CD8-positive, alpha-beta T cell (primary cell): ENCODE measurements at regions of chr15 and their contacts with region 1.

Region 1: GRCh38 chr15:40593588-40594428 is at the start of gene KNL1:
- DNase-seq: peak; percentile 70 to 96 (median 85)
- ATAC-seq: peak; percentile 83
- H3K4me3 ChIP-seq: peak within 1 kb of the TSS; percentile 76 to 82
- H3K4me3 Mint-ChIP-seq: peak within 1 kb of the TSS; percentile 95
- H3K27ac ChIP-seq: peak within 1 kb of the TSS; percentile 78 to 92
- H3K27ac Mint-ChIP-seq: peak within 1 kb of the TSS; percentile 98
- H3K4me1 ChIP-seq: no peaks in the 10 kb centered on the region
- H3K4me1 Mint-ChIP-seq: peaks cover 20% of the 10 kb centered on the region
- H3K27me3 ChIP-seq: peaks cover 0 to 2% of the 10 kb centered on the region in 2 experiments
- H3K27me3 Mint-ChIP-seq: peaks cover 6% of the 10 kb centered on the region
- CTCF ChIP-seq: no peak
- total RNA-seq, gene KNL1: 0.83 to 0.98 TPM

Region 2: DNA sequence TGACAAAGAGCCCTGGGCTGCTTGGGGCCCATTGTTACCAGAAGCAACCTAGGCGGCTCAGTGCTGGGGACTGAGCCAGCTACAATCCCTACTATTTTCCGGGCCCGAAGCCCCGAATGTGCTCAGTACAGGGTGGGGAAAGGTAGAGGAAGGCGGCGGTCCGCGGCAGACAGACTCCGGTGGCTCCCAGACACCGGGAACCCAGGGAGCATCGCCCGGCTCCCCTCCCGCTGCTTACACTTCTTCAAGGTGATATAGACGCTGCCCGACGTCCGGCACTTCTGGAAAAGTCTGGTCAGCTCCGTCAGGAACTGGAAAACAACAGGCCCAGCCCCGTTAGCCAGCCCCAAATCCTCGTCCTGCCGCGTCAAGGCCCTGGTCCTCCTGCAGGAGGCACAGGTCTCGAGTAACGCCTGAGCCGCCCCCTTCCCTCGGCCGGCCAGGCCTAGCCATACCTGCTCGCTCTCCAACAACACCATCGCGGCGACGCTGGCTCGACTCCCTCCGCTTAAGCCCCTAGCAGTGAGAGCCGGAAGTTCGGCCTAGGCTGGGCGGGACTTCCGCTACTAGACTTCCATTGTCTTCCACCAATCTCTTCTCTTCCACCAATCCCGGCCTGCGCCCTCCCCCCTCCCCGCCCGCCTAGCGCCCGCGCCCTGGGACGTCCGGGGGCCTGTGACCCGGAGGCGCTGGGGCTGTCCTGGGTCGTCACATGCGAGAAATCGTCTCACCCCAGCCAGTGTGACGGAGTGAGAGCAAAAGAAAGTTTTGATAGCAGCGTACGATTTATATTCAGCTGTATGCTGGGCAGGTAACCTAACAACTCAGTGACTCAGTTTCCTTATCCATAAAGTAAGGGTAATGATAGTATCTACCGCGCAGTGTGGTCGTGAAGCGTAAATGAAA is 554.9 kb before region 1 on chr15 and contains the start of gene SRP14:
- CTCF ChIA-PET with region 1: no interaction called
- POLR2A ChIA-PET with region 1: no interaction called
- intact Hi-C with region 1: loop called in 1 of 2 experiments (anchors 5 kb)
- DNase-seq: peak; percentile 86 to 96 (median 93)
- ATAC-seq: peak; percentile 94
- H3K4me3 ChIP-seq: peak within 1 kb of the TSS; percentile 92 to 99
- H3K4me3 Mint-ChIP-seq: peak within 1 kb of the TSS; percentile 99
- H3K27ac ChIP-seq: peak within 1 kb of the TSS; percentile 84 to 96
- H3K27ac Mint-ChIP-seq: peak within 1 kb of the TSS; percentile 99
- H3K4me1 ChIP-seq: peaks cover 16% of the 10 kb centered on the region
- H3K4me1 Mint-ChIP-seq: peaks cover 43% of the 10 kb centered on the region
- H3K27me3 ChIP-seq: no peaks in the 10 kb centered on the region
- H3K27me3 Mint-ChIP-seq: no peaks in the 10 kb centered on the region
- CTCF ChIP-seq: no peak
- total RNA-seq, gene SRP14: 133 to 135 TPM

Region 3: GRCh38 chr15:40564591-40565332 is 29.0 kb before region 1 on chr15 and contains the start of gene CCDC32:
- CTCF ChIA-PET with region 1: interaction called, 10 read pairs
- POLR2A ChIA-PET with region 1: interaction called, 11 read pairs
- intact Hi-C with region 1: loop called (anchors 1 kb)
- DNase-seq: peak; percentile 84 to 99 (median 94)
- ATAC-seq: peak; percentile 90
- H3K4me3 ChIP-seq: peak within 1 kb of the TSS; percentile 89 to 97
- H3K4me3 Mint-ChIP-seq: peak within 1 kb of the TSS; percentile 95
- H3K27ac ChIP-seq: peak within 1 kb of the TSS; percentile 87 to 97
- H3K27ac Mint-ChIP-seq: peak within 1 kb of the TSS; percentile 97
- H3K4me1 ChIP-seq: peaks cover 11% of the 10 kb centered on the region
- H3K4me1 Mint-ChIP-seq: peaks cover 52% of the 10 kb centered on the region
- H3K27me3 ChIP-seq: no peaks in the 10 kb centered on the region
- H3K27me3 Mint-ChIP-seq: no peaks in the 10 kb centered on the region
- CTCF ChIP-seq: no peak
- total RNA-seq, gene CCDC32: 18.3 to 20.3 TPM

Region 4: GRCh38 chr15:40684381-40684780 is 90.6 kb after region 1 on chr15:
- CTCF ChIA-PET with region 1: no interaction called
- POLR2A ChIA-PET with region 1: no interaction called
- intact Hi-C with region 1: loop called (anchors 2 to 5 kb)
- DNase-seq: no peak
- ATAC-seq: no peak
- H3K4me3 ChIP-seq: no peak overlapping the region
- H3K4me3 Mint-ChIP-seq: no peak overlapping the region
- H3K27ac ChIP-seq: no peak overlapping the region
- H3K27ac Mint-ChIP-seq: peak overlapping the region; percentile 8
- H3K4me1 ChIP-seq: no peaks in the 10 kb centered on the region
- H3K4me1 Mint-ChIP-seq: no peaks in the 10 kb centered on the region
- H3K27me3 ChIP-seq: no peaks in the 10 kb centered on the region
- H3K27me3 Mint-ChIP-seq: no peaks in the 10 kb centered on the region
- CTCF ChIP-seq: no peak

Region 5: DNA sequence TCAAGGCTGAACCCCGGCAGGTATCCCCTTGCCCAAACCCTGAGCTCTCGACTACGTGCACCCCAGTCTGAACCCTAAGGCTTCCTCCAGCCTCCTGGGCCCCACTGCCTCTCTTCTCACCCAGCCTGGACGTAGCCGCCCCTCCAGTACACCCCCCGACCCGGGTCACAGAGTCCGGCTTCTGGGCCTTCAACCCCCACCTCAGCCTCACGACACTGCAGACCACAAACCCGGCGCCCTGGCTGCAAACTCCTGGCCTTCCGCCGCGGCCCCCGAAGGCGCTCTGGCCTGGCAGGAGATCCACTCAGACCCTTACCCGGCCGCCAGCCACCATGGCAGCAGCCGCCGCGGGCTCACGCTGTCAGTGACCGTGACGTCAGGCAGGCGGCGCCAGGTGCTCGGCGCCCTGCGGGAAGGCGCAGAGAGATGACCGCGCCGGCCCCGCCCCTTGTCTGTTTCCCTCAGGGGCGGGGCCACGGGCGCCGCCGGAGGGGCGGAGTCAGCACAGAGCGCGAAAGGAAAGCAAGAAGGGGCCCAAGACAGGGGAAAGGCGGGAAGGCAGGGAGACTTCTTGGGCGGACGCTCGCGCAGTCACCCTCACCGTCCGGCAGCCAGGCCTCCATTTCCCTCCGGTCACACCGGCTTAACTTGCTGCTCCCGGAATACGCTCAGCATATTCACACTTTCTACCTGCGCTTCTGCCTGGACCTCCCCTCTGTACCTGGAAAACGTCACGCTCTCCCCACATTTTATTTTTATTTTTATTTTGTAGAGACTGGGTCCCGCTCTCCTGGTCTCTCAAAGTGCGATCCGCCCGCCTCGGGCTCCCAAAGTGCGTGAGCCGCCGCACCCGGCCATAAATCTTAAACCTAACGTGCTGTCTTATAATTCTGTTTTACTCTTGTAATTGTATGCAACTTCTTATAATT is 161.3 kb after region 1 on chr15 and contains the start of gene RMDN3:
- CTCF ChIA-PET with region 1: no interaction called
- POLR2A ChIA-PET with region 1: no interaction called
- intact Hi-C with region 1: loop called (anchors 1 to 5 kb)
- DNase-seq: peak; percentile 84 to 96 (median 93)
- ATAC-seq: peak; percentile 95
- H3K4me3 ChIP-seq: peak within 1 kb of the TSS; percentile 99
- H3K4me3 Mint-ChIP-seq: peak within 1 kb of the TSS; percentile 94
- H3K27ac ChIP-seq: peak within 1 kb of the TSS; percentile 91 to 94
- H3K27ac Mint-ChIP-seq: peak within 1 kb of the TSS; percentile 94
- H3K4me1 ChIP-seq: peaks cover 6% of the 10 kb centered on the region
- H3K4me1 Mint-ChIP-seq: peaks cover 26% of the 10 kb centered on the region
- H3K27me3 ChIP-seq: no peaks in the 10 kb centered on the region
- H3K27me3 Mint-ChIP-seq: no peaks in the 10 kb centered on the region
- CTCF ChIP-seq: no peak
- total RNA-seq, gene RMDN3: 26.7 to 30.5 TPM